ENCODE measurements at regions of chr6 and their contacts with region 1.

Region 1: GRCh38 chr6:160520043-160520904 is 143.8 kb downstream of the LPA start:
- DNase-seq: peak; percentile 1
- H3K4me3 ChIP-seq: peak overlapping the region; percentile 52 to 91 (median 69)
- H3K27ac ChIP-seq: no peak overlapping the region
- H3K4me1 ChIP-seq: peaks cover 3% of the 10 kb centered on the region
- H3K27me3 ChIP-seq: no peaks in the 10 kb centered on the region
- CTCF ChIP-seq: no peak

Region 2: DNA sequence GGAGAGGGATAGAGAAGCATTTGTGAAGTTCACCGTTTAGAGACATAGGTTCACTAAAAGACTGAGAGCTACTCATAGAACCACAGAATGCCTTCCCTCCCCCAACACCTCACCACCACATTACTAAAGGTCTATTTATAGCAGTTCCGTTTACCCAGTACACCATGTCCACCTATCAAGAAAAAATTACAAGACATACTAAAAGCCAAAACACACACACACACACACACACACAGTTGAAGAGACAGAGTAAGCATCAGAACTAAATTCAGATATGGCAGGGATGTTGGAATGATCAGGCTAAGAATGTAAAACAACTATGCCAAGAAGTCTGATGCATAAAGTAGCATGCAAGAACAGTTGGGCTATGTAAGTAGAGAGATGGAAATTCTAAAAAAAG is 119.8 kb before region 1 on chr6:
- CTCF ChIA-PET with region 1: no interaction called
- dilution Hi-C with region 1: no loop called
- in situ Hi-C with region 1: no loop called
- intact Hi-C with region 1: no loop called
- DNase-seq: peak; percentile 16
- H3K4me3 ChIP-seq: no peak overlapping the region
- H3K27ac ChIP-seq: no peak overlapping the region
- H3K4me1 ChIP-seq: peaks cover 22% of the 10 kb centered on the region
- H3K27me3 ChIP-seq: no peaks in the 10 kb centered on the region
- CTCF ChIP-seq: no peak

Region 3: DNA sequence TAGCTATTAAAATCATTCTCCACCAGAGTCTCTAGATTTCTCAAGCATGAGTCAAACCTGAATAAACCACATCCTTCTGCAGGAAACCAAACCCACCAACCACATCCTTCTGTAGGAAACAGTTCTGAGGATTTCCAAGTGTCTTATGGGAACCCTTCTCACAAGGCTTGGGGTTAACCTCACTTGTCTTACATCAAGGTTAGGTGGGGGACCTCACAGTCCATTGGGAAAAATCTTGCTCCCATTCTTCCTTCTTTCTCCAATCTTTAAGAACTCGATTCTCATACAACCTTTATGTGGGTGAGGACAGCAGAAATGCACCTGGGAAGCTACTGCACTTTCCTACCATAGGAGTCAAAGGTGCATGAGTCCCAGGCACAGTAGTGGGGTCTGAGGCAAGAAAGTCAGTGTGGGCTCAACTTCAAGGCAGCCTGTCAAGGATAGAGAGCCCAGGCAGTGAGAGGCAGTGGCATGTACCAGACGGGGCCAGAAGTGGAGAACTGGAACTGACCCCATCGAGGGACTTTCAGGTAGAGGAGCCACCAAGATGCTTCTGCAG is 57.6 kb before region 1 on chr6:
- CTCF ChIA-PET with region 1: interaction called, 13 read pairs
- dilution Hi-C with region 1: no loop called
- in situ Hi-C with region 1: no loop called
- intact Hi-C with region 1: no loop called
- DNase-seq: peak; percentile 82
- H3K4me3 ChIP-seq: no peak overlapping the region
- H3K27ac ChIP-seq: no peak overlapping the region
- H3K4me1 ChIP-seq: peaks cover 18% of the 10 kb centered on the region
- H3K27me3 ChIP-seq: no peaks in the 10 kb centered on the region
- CTCF ChIP-seq: no peak

Region 4: DNA sequence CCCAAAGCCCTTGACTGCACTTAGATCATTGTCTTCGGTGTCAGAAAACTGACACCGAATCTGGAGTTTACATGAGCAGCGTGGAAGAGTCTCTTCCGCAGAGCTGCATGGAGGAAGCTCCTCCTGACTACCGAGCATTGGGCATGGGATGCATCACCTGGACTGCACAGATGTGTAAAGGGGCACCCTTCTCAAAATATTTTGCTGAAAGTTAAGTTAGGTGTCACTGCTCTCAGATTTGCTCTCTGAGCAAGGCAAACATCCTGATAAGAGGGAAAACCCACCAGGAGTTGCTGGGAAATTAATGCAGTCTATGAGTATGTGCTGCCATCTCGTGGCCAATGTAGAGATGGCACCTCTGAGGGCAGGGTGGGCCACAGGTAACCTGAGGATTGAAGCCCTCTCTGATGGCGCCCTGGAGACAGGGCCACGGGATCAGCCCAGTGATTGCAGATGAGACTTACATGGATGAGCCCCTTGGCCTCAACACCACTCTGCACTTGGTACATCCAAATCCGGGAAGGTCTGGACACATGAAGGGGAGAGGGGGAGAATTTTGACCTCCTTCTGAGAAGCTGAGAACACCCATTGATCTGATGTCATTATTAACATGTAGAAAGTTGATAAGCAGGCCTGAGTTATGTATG is 13.9 kb after region 1 on chr6:
- CTCF ChIA-PET with region 1: no interaction called
- dilution Hi-C with region 1: no loop called
- in situ Hi-C with region 1: no loop called
- intact Hi-C with region 1: loop called (anchors 1 kb)
- DNase-seq: peak; percentile 25
- H3K4me3 ChIP-seq: no peak overlapping the region
- H3K27ac ChIP-seq: no peak overlapping the region
- H3K4me1 ChIP-seq: no peaks in the 10 kb centered on the region
- H3K27me3 ChIP-seq: no peaks in the 10 kb centered on the region
- CTCF ChIP-seq: peak; percentile 92 to 93

Region 5: DNA sequence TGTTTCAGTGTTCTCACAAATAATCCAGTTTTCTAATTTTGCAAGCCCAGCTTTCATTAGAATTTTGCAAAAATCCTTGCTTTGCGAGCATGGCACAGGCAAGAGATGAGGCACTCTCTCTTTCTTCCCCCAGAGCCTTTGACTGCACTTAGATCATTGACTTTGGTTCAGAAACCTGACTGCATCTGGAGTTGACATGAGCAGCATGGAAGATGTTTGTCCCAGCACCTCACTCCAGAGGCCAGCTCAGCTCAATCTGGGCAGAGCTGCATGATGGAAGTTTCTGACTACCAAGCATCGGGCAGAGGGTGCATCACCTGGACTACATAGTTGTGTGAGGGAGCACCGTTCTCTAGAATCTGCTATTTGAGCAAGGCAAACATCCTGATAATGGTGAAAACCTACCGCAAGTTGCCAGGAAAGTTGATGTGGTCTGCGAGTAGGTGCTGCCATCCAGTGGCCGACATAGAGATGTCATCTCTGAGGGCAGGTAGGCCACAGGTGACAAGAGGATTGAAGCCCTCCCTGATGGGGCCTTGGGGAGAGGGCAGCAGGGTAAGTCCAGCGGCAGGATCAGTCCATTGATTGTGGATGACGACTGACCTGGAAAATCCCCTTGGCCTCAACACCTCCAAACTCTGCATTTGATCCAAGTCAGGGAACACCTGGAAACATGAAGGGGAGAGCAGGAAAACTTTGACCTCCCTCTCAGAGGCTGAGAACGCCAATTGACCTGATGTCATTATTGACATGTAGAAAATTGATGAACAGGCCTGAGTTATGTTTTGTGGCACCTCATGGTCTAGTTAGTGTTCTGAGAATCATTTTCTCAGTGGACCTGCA is 147.6 kb after region 1 on chr6:
- CTCF ChIA-PET with region 1: no interaction called
- dilution Hi-C with region 1: no loop called
- in situ Hi-C with region 1: no loop called
- intact Hi-C with region 1: loop called (anchors 1 kb)
- DNase-seq: peak; percentile 12
- H3K4me3 ChIP-seq: no peak overlapping the region
- H3K27ac ChIP-seq: no peak overlapping the region
- H3K4me1 ChIP-seq: no peaks in the 10 kb centered on the region
- H3K27me3 ChIP-seq: no peaks in the 10 kb centered on the region
- CTCF ChIP-seq: peak; percentile 77

Region 6: GRCh38 chr6:160899671-160900430 is 379.6 kb after region 1 on chr6:
- CTCF ChIA-PET with region 1: no interaction called
- dilution Hi-C with region 1: no loop called
- in situ Hi-C with region 1: no loop called
- intact Hi-C with region 1: no loop called
- DNase-seq: no peak
- H3K4me3 ChIP-seq: no peak overlapping the region
- H3K27ac ChIP-seq: no peak overlapping the region
- H3K4me1 ChIP-seq: peaks cover 7% of the 10 kb centered on the region
- H3K27me3 ChIP-seq: no peaks in the 10 kb centered on the region
- CTCF ChIP-seq: no peak

Measured in mammary epithelial cell (primary cell).